Heart left ventricle (tissue), 16 donors: ENCODE measurements at regions of chr15 and their contacts with region 1.

Region 1: DNA sequence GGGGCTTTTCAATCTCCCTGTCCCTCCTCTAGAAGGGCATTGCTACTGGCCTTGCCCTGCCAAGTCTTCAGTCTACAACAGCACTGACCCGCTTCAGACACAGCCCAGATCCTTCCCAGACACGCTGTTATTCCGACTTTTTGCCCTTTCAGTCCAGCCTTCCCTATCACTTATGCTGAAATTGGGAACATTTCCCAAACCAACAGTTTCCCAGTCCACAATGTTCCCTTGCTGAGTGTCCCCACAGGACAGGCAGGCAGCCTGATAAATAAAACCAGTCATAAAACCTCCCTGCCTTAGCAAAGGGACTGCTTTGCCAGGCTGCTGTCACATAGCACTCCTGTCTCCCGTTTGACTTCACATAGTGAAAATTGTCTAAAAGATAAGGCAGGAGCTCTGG is 43.5 kb downstream of the GOLGA6L2 start:
- DNase-seq: peak in 4 of 5 donors; percentile 14 to 81 (median 48)
- ATAC-seq: peak; percentile 95 to 96 (median 95)
- H3K4me3 ChIP-seq: peak overlapping the region in 1 of 12 donors; percentile 19
- H3K27ac ChIP-seq: peak overlapping the region; percentile 46 to 93 (median 78)
- H3K4me1 ChIP-seq: peaks cover 0 to 25% (median 5%) of the 10 kb centered on the region in 12 donors
- H3K27me3 ChIP-seq: no peaks in the 10 kb centered on the region
- CTCF ChIP-seq: no peak
- POLR2A ChIP-seq: no peak

Region 2: GRCh38 chr15:23370578-23370977 is 33.0 kb before region 1 on chr15:
- intact Hi-C with region 1: loop called in 1 of 10 experiments (anchors 2 kb)
- DNase-seq: no peak
- ATAC-seq: peak in 2 of 4 donors; percentile 29 to 42
- H3K4me3 ChIP-seq: no peak overlapping the region
- H3K27ac ChIP-seq: peak overlapping the region in 11 of 12 donors; percentile 17 to 70 (median 61)
- H3K4me1 ChIP-seq: peaks cover 0 to 11% (median 0%) of the 10 kb centered on the region in 12 donors
- H3K27me3 ChIP-seq: no peaks in the 10 kb centered on the region
- CTCF ChIP-seq: no peak
- POLR2A ChIP-seq: no peak

Region 3: DNA sequence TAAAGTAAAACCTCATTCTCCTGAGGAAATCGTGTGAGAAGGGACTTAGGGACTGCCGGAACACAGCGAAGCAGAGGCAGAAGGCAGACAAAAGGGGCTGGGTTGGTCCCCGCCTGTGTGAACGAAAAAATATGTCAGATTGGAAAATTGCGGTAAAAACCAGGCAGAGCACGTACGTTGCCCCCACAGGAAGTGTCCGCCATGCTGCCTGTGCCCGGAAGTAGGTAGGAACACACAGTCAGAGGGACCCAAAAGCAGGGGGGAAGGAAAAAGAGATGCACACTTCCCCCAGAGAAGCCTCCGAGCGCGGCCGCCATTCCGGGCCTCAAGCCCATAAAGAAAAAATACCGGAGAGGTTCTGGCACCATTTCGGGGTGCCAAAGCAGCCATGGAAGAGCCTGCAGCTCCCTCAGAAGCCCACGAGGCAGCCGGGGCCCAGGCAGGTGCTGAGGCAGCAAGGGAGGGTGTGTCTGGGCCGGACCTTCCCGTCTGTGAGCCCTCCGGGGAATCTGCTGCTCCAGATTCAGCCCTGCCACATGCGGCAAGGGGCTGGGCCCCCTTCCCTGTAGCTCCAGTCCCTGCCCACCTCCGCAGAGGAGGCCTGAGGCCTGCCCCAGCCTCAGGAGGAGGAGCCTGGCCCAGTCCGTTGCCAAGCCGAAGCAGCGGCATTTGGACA is 162.0 kb after region 1 on chr15 and contains the start of gene MKRN3:
- intact Hi-C with region 1: no loop called
- DNase-seq: no peak
- ATAC-seq: peak in 1 of 4 donors; percentile 20
- H3K4me3 ChIP-seq: peak within 1 kb of the TSS in 5 of 12 donors; percentile 16 to 49 (median 20)
- H3K27ac ChIP-seq: peak within 1 kb of the TSS in 1 of 12 donors; percentile 29
- H3K4me1 ChIP-seq: no peaks in the 10 kb centered on the region
- H3K27me3 ChIP-seq: peaks cover 0 to 13% (median 6%) of the 10 kb centered on the region in 9 donors
- CTCF ChIP-seq: no peak
- POLR2A ChIP-seq: no peak
- total RNA-seq, gene MKRN3: 0.13 to 0.45 (median 0.33) TPM in 3 of 9 donors, not detected in the others